Naive thymus-derived CD4-positive, alpha-beta T cell (primary cell): ENCODE measurements at regions of chr2 and their contacts with region 1.

Region 1: GRCh38 chr2:101751875-101752619 is 54.5 kb downstream of the MAP4K4 start:
- DNase-seq: no peak
- ATAC-seq: peak; percentile 55
- H3K4me3 ChIP-seq: no peak overlapping the region
- H3K4me3 Mint-ChIP-seq: peak overlapping the region in 7 of 10 donors; percentile 9 to 69 (median 42)
- H3K27ac ChIP-seq: no peak overlapping the region
- H3K27ac Mint-ChIP-seq: peak overlapping the region in 6 of 9 donors; percentile 1 to 43 (median 24)
- H3K4me1 ChIP-seq: peaks cover 0 to 38% of the 10 kb centered on the region in 2 donors
- H3K4me1 Mint-ChIP-seq: peaks cover 59 to 82% (median 77%) of the 10 kb centered on the region in 7 donors
- H3K27me3 ChIP-seq: no peaks in the 10 kb centered on the region
- H3K27me3 Mint-ChIP-seq: no peaks in the 10 kb centered on the region

Region 2: DNA sequence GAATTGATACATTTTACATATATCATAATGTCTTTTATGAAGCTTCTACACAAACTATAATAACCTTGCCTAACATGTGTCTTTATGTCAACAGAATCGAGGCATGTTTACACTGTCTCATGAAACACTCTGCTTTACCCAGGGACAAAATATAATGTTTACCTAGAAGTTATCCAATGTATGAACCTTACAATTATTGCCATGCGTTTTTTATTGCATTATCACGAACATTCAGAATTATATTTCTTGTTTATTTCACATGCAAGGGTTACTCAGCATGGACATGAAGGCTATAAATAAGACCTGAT is 1449.5 kb before region 1 on chr2:
- CTCF ChIA-PET with region 1: no interaction called
- POLR2A ChIA-PET with region 1: no interaction called
- intact Hi-C with region 1: no loop called
- DNase-seq: no peak
- ATAC-seq: no peak
- H3K4me3 ChIP-seq: no peak overlapping the region
- H3K4me3 Mint-ChIP-seq: no peak overlapping the region
- H3K27ac ChIP-seq: no peak overlapping the region
- H3K27ac Mint-ChIP-seq: no peak overlapping the region
- H3K4me1 ChIP-seq: no peaks in the 10 kb centered on the region
- H3K4me1 Mint-ChIP-seq: no peaks in the 10 kb centered on the region
- H3K27me3 ChIP-seq: no peaks in the 10 kb centered on the region
- H3K27me3 Mint-ChIP-seq: peaks cover 9 to 45% (median 19%) of the 10 kb centered on the region in 5 donors

Region 3: GRCh38 chr2:101625387-101625786 is 126.7 kb before region 1 on chr2:
- CTCF ChIA-PET with region 1: no interaction called
- POLR2A ChIA-PET with region 1: no interaction called
- intact Hi-C with region 1: no loop called
- DNase-seq: no peak
- ATAC-seq: peak; percentile 19
- H3K4me3 ChIP-seq: no peak overlapping the region
- H3K4me3 Mint-ChIP-seq: no peak overlapping the region
- H3K27ac ChIP-seq: no peak overlapping the region
- H3K27ac Mint-ChIP-seq: peak overlapping the region in 8 of 9 donors; percentile 10 to 62 (median 36)
- H3K4me1 ChIP-seq: peaks cover 5 to 15% of the 10 kb centered on the region in 2 donors
- H3K4me1 Mint-ChIP-seq: peaks cover 18 to 33% (median 30%) of the 10 kb centered on the region in 7 donors
- H3K27me3 ChIP-seq: no peaks in the 10 kb centered on the region
- H3K27me3 Mint-ChIP-seq: no peaks in the 10 kb centered on the region

Region 4: GRCh38 chr2:101736861-101737291 is 15.2 kb before region 1 on chr2:
- CTCF ChIA-PET with region 1: no interaction called
- POLR2A ChIA-PET with region 1: no interaction called
- intact Hi-C with region 1: loop called in 1 of 2 experiments (anchors 1 kb)
- DNase-seq: no peak
- ATAC-seq: peak; percentile 64
- H3K4me3 ChIP-seq: no peak overlapping the region
- H3K4me3 Mint-ChIP-seq: peak overlapping the region in 7 of 10 donors; percentile 1 to 60 (median 17)
- H3K27ac ChIP-seq: no peak overlapping the region
- H3K27ac Mint-ChIP-seq: peak overlapping the region; percentile 3 to 89 (median 56)
- H3K4me1 ChIP-seq: peaks cover 43 to 59% of the 10 kb centered on the region in 2 donors
- H3K4me1 Mint-ChIP-seq: peaks cover 60 to 98% (median 93%) of the 10 kb centered on the region in 7 donors
- H3K27me3 ChIP-seq: no peaks in the 10 kb centered on the region
- H3K27me3 Mint-ChIP-seq: no peaks in the 10 kb centered on the region

Region 5: GRCh38 chr2:101741775-101742520 is 10.1 kb before region 1 on chr2:
- CTCF ChIA-PET with region 1: no interaction called
- POLR2A ChIA-PET with region 1: interaction called, 6 read pairs
- intact Hi-C with region 1: loop called in 1 of 2 experiments (anchors 1 kb)
- DNase-seq: no peak
- ATAC-seq: no peak
- H3K4me3 ChIP-seq: no peak overlapping the region
- H3K4me3 Mint-ChIP-seq: peak overlapping the region in 9 of 10 donors; percentile 4 to 67 (median 57)
- H3K27ac ChIP-seq: peak overlapping the region; percentile 19
- H3K27ac Mint-ChIP-seq: peak overlapping the region; percentile 23 to 96 (median 83)
- H3K4me1 ChIP-seq: peaks cover 26 to 51% of the 10 kb centered on the region in 2 donors
- H3K4me1 Mint-ChIP-seq: peaks cover 60 to 98% (median 95%) of the 10 kb centered on the region in 7 donors
- H3K27me3 ChIP-seq: no peaks in the 10 kb centered on the region
- H3K27me3 Mint-ChIP-seq: no peaks in the 10 kb centered on the region

Region 6: DNA sequence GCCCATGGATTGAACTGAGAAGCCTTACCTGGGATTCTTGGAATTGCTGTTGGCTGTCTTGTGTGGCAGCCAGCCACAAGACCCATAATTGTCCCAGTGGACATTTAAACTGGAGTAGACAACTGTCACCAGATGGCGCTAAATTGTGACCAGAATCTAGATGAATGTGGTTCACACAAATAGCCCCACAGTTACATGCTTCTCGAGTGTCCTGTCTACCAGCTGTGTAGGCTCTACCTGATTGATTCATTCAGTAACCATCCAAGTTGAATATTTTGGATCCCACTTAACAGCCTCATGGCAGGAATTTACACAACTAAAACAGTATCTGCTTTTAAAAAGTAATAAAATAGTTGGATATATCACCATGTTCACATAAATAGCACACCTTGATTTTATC is 18.7 kb after region 1 on chr2:
- CTCF ChIA-PET with region 1: interaction called, 3 read pairs
- POLR2A ChIA-PET with region 1: interaction called, 4 read pairs
- intact Hi-C with region 1: loop called in 1 of 2 experiments (anchors 1 kb)
- DNase-seq: no peak
- ATAC-seq: peak; percentile 48
- H3K4me3 ChIP-seq: no peak overlapping the region
- H3K4me3 Mint-ChIP-seq: peak overlapping the region in 8 of 10 donors; percentile 48 to 79 (median 73)
- H3K27ac ChIP-seq: no peak overlapping the region
- H3K27ac Mint-ChIP-seq: peak overlapping the region in 7 of 9 donors; percentile 14 to 90 (median 59)
- H3K4me1 ChIP-seq: peaks cover 20 to 79% of the 10 kb centered on the region in 2 donors
- H3K4me1 Mint-ChIP-seq: peaks cover 73 to 98% (median 95%) of the 10 kb centered on the region in 7 donors
- H3K27me3 ChIP-seq: no peaks in the 10 kb centered on the region
- H3K27me3 Mint-ChIP-seq: no peaks in the 10 kb centered on the region

Region 7: DNA sequence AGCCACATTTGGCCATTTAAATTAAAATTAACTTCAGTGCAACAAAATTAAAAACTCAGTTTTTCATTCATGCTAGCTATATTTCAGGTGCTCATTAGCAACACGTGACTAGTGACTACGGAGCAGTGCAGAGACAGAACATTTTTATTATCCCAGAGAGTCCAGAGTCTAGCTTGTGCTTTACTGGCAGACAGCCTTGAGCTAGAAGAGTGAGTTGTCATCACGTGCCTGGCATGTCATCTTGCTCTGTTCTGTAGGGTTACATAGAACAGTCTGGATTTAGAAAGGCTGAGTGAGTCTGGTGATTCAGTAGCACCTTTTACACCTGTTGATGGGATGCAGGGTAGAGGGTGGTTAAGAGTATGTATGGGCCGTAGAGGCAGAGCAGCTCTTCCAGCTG is 102.8 kb after region 1 on chr2:
- CTCF ChIA-PET with region 1: no interaction called
- POLR2A ChIA-PET with region 1: no interaction called
- intact Hi-C with region 1: no loop called
- DNase-seq: no peak
- ATAC-seq: no peak
- H3K4me3 ChIP-seq: no peak overlapping the region
- H3K4me3 Mint-ChIP-seq: no peak overlapping the region
- H3K27ac ChIP-seq: no peak overlapping the region
- H3K27ac Mint-ChIP-seq: peak overlapping the region in 2 of 9 donors; percentile 27 to 41
- H3K4me1 ChIP-seq: no peaks in the 10 kb centered on the region
- H3K4me1 Mint-ChIP-seq: peaks cover 10 to 40% (median 12%) of the 10 kb centered on the region in 7 donors
- H3K27me3 ChIP-seq: no peaks in the 10 kb centered on the region
- H3K27me3 Mint-ChIP-seq: no peaks in the 10 kb centered on the region